ENCODE measurements at regions of chr12 and their contacts with region 1.

Region 1: DNA sequence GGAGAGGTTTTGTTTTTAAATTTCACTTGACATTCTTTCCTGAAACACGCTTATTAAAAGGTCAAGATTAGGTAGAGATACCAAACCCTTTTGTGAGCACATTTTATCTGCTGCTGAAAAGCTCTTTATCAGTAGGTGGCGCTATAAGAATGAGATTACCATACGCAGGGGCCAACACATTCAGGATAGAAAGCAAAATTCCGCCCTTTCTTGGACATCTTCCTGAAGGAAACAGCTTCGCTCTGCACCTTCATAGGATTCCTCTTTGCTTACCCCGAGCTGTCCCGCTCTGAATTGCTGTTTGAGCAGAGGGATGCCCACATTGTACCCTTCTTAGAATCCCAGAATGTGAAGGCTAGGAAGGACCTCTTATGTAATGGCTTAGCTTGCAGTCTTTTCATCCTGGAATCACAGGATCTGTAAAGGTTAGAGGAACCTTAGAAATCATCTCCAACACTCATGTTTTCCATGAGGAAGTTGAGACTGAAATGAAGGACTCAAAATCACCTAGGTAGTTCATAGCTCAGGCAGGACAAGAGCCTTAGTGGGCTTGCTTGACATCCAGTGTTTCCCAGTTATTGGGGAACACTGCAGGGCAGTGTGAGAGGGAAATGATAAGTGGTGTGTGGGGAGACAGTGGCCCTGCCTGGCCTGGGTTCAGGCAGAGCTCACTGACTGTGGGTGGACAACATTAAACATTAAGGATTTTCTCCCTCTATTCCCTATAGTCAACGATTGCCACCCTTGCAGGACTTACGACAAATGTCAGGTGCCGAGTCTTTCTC is 38.7 kb upstream of the CRY1 start:
- DNase-seq: peak in 4 of 5 donors; percentile 42 to 49 (median 45)
- H3K4me3 ChIP-seq: no peak overlapping the region
- H3K4me3 Mint-ChIP-seq: no peak overlapping the region
- H3K27ac ChIP-seq: no peak overlapping the region
- H3K27ac Mint-ChIP-seq: peak overlapping the region in 1 of 7 donors; percentile 62
- H3K4me1 ChIP-seq: no peaks in the 10 kb centered on the region
- H3K4me1 Mint-ChIP-seq: peaks cover 0 to 6% (median under 1%) of the 10 kb centered on the region in 4 donors
- H3K27me3 ChIP-seq: no peaks in the 10 kb centered on the region
- H3K27me3 Mint-ChIP-seq: no peaks in the 10 kb centered on the region

Region 2: GRCh38 chr12:107317751-107318613 is 186.0 kb after region 1 on chr12:
- CTCF ChIA-PET with region 1: interaction called, 6 read pairs
- POLR2A ChIA-PET with region 1: no interaction called
- intact Hi-C with region 1: loop called (anchors 2 kb)
- DNase-seq: peak; percentile 81 to 93 (median 84)
- H3K4me3 ChIP-seq: peak overlapping the region; percentile 73 to 84
- H3K4me3 Mint-ChIP-seq: peak overlapping the region; percentile 83 to 93 (median 86)
- H3K27ac ChIP-seq: peak overlapping the region; percentile 46
- H3K27ac Mint-ChIP-seq: peak overlapping the region; percentile 67 to 98 (median 75)
- H3K4me1 ChIP-seq: peaks cover 31% of the 10 kb centered on the region
- H3K4me1 Mint-ChIP-seq: peaks cover 18 to 37% (median 30%) of the 10 kb centered on the region in 4 donors
- H3K27me3 ChIP-seq: no peaks in the 10 kb centered on the region
- H3K27me3 Mint-ChIP-seq: peaks cover 0 to 5% of the 10 kb centered on the region in 2 donors

Region 3: DNA sequence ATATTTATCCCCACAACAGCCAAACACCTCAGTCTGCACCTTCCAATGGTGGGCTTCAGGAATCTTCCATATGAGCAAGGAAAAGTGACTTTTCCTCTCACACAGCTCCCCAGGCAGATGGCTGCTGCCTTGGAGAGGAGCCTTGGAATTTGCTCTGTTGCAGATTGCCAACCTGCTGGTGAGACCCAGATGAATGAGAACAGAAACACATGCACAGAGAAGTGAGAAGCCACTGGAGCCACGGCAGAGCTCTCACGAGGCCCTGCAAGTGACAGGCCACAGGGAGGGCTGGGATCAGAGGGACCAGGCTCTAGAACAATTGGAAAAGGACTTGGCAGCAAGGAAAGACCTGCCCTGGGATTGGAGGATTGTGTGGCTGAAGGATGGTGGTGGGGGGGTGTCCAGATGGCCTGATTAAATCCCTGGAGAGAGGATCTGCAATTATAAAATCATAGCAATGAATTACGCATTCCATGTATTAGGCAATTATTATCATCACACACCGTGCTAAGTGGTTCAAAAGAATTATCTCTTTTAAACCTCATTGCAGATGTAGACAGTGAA is 468.6 kb after region 1 on chr12:
- CTCF ChIA-PET with region 1: interaction called, 313 read pairs
- POLR2A ChIA-PET with region 1: interaction called, 3 read pairs
- intact Hi-C with region 1: no loop called
- DNase-seq: no peak
- H3K4me3 ChIP-seq: no peak overlapping the region
- H3K4me3 Mint-ChIP-seq: no peak overlapping the region
- H3K27ac ChIP-seq: no peak overlapping the region
- H3K27ac Mint-ChIP-seq: peak overlapping the region in 2 of 7 donors; percentile 28 to 84
- H3K4me1 ChIP-seq: no peaks in the 10 kb centered on the region
- H3K4me1 Mint-ChIP-seq: peaks cover 0 to 1% (median 0%) of the 10 kb centered on the region in 4 donors
- H3K27me3 ChIP-seq: no peaks in the 10 kb centered on the region
- H3K27me3 Mint-ChIP-seq: no peaks in the 10 kb centered on the region

Region 4: GRCh38 chr12:107622005-107622404 is 490.0 kb after region 1 on chr12:
- CTCF ChIA-PET with region 1: interaction called, 11 read pairs
- POLR2A ChIA-PET with region 1: no interaction called
- intact Hi-C with region 1: no loop called
- DNase-seq: no peak
- H3K4me3 ChIP-seq: no peak overlapping the region
- H3K4me3 Mint-ChIP-seq: no peak overlapping the region
- H3K27ac ChIP-seq: no peak overlapping the region
- H3K27ac Mint-ChIP-seq: no peak overlapping the region
- H3K4me1 ChIP-seq: no peaks in the 10 kb centered on the region
- H3K4me1 Mint-ChIP-seq: no peaks in the 10 kb centered on the region
- H3K27me3 ChIP-seq: no peaks in the 10 kb centered on the region
- H3K27me3 Mint-ChIP-seq: no peaks in the 10 kb centered on the region